Activated CD8-positive, alpha-beta T cell treated with anti-CD3 and anti-CD28 coated beads for 36 hours (primary cell): ENCODE measurements at regions of chr17 and their contacts with region 1.

Region 1: GRCh38 chr17:64166876-64167275 is 36.9 kb upstream of the ERN1 start:
- DNase-seq: no peak
- ATAC-seq: no peak
- H3K4me3 Mint-ChIP-seq: no peak overlapping the region
- H3K27ac Mint-ChIP-seq: no peak overlapping the region
- H3K4me1 Mint-ChIP-seq: no peaks in the 10 kb centered on the region
- H3K27me3 Mint-ChIP-seq: no peaks in the 10 kb centered on the region
- CTCF ChIP-seq: no peak

Region 2: DNA sequence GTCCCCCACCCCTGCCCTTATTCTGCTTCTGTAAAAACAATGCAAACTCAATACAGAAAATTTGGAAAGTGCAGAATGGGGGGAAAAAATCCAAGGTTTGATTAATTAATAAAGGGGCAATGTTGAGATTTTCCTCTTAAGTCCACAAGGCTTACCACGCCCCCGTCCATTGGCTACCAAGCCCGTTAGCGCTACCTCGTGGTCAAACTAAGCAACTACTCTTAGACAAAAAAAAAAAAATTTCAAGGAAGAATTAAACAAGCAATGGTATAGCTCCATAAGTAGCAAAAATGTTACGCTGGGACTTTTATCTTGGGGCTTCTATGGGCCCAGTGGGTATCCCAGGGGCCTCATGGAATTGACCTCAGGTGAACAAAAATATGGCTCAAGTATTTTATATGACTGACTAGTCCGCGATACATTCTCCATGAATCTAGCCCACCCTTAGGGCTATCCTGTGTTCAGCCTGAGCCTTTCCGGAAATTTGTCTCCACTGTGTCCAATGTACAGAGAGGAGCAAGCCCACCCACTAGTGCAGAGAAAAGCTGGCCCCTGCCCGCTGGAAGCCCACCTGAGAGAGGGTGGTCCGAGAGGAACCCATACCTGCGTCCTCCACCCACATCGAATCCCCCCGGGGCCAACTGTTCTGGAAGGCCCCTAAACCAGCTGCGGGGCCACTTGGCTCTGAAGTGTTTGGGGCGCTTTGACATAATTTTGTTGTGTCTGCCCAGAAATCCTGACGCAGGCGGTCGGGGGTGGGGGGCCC is 115.3 kb after region 1 on chr17:
- CTCF ChIA-PET with region 1: interaction called, 12 read pairs
- POLR2A ChIA-PET with region 1: no interaction called
- intact Hi-C with region 1: no loop called
- DNase-seq: peak; percentile 74
- ATAC-seq: peak; percentile 77
- H3K4me3 Mint-ChIP-seq: no peak overlapping the region
- H3K27ac Mint-ChIP-seq: no peak overlapping the region
- H3K4me1 Mint-ChIP-seq: peaks cover 2% of the 10 kb centered on the region
- H3K27me3 Mint-ChIP-seq: no peaks in the 10 kb centered on the region
- CTCF ChIP-seq: peak; percentile 84